AG04450 (cell line): ENCODE measurements at regions of chrX and their contacts with region 1.

Region 1: DNA sequence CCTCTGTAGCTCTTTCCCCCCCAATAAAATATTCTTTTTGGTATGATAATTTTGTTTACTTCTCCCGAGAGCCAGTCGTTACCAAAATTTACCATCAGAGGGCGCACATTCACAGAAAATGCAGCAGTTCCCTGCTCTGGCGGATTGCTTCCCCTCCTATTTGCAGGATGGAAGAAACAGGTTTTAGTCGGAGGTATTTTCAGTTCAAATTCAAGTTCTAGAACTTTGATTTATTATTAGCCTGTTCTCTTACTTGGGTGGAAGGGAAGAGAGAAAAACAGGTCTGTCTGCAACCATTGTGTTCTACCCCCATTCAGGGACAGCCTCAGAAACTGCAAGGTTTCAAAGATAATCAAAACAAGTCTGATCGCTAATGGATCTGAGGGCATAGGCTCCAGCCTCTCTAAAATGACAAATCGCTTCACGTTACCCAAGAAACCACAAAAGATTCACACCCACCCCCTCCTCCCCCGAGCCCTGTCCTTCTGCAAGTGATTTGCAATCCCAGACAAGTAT is 263.8 kb upstream of the RPS6KA3 start:
- DNase-seq: no peak
- H3K4me3 ChIP-seq: peak overlapping the region; percentile 36
- H3K27ac ChIP-seq: no peak overlapping the region
- H3K27me3 ChIP-seq: no peaks in the 10 kb centered on the region
- CTCF ChIP-seq: peak; percentile 63

Region 2: GRCh38 chrX:19382555-19383145 is 1147.8 kb before region 1 on chrX:
- CTCF ChIA-PET with region 1: no interaction called
- POLR2A ChIA-PET with region 1: no interaction called
- DNase-seq: no peak
- H3K4me3 ChIP-seq: no peak overlapping the region
- H3K27ac ChIP-seq: no peak overlapping the region
- H3K27me3 ChIP-seq: no peaks in the 10 kb centered on the region
- CTCF ChIP-seq: peak; percentile 66

Region 3: GRCh38 chrX:20362268-20363267 is 167.9 kb before region 1 on chrX:
- CTCF ChIA-PET with region 1: interaction called, 10 read pairs
- POLR2A ChIA-PET with region 1: no interaction called
- DNase-seq: no peak
- H3K4me3 ChIP-seq: no peak overlapping the region
- H3K27ac ChIP-seq: peak overlapping the region; percentile 78
- H3K27me3 ChIP-seq: no peaks in the 10 kb centered on the region
- CTCF ChIP-seq: no peak

Region 4: DNA sequence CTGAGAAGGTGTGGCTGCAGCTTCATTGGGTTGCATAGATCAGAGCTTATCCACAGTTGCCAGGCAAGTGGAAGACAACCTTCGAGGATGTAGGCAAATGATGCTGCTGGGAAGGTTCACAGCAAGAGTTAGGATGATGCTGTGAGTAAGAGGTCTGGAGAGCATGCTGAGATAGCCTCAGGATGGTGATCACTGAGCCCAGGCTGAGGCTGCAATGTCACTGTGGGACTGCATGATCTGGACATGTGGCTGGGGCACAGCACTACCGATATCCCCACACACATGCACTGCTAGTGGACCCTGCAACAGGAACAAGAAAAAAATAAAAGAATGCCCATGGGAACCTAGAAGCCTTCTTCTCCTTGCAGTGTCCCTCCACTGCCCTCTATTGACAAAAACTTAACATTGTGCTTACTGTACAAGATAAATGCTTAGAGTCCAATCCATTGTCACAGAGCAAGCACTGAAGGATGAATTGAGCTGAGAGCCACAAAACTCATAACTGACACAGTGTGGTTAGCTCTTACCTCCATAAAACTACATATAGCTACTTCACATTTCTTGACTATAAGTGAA is 949.3 kb after region 1 on chrX:
- CTCF ChIA-PET with region 1: interaction called, 90 read pairs
- POLR2A ChIA-PET with region 1: no interaction called
- DNase-seq: peak; percentile 11
- H3K4me3 ChIP-seq: no peak overlapping the region
- H3K27ac ChIP-seq: no peak overlapping the region
- H3K27me3 ChIP-seq: no peaks in the 10 kb centered on the region
- CTCF ChIP-seq: peak; percentile 70

Region 5: DNA sequence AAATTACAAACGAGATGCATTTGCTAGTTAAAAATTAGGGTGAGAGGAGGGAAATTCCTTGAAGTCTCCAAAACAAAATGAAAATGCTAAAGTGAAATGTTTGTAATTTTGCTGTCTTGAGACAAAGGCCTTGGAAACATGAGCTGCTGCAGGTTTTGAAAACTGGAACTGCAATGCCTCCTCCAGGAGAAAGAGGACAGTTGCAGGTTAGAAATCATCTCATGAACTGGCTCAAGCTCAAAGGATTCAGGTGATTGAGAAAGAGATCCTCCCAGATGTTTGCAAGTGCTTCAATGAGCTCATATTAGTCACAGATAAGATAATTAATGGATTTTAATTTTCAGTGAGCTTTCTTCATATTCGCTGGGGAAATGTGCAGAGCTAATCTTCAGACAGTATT is 1195.0 kb after region 1 on chrX:
- CTCF ChIA-PET with region 1: interaction called, 31 read pairs
- POLR2A ChIA-PET with region 1: no interaction called
- DNase-seq: peak; percentile 33
- H3K4me3 ChIP-seq: no peak overlapping the region
- H3K27ac ChIP-seq: no peak overlapping the region
- H3K27me3 ChIP-seq: no peaks in the 10 kb centered on the region
- CTCF ChIP-seq: peak; percentile 57

Region 6: GRCh38 chrX:21745756-21746155 is 1215.3 kb after region 1 on chrX:
- CTCF ChIA-PET with region 1: interaction called, 30 read pairs
- POLR2A ChIA-PET with region 1: no interaction called
- DNase-seq: no peak
- H3K4me3 ChIP-seq: no peak overlapping the region
- H3K27ac ChIP-seq: no peak overlapping the region
- H3K27me3 ChIP-seq: no peaks in the 10 kb centered on the region
- CTCF ChIP-seq: peak; percentile 55